ENCODE measurements at regions of chr3 and their contacts with region 1.

Region 1: DNA sequence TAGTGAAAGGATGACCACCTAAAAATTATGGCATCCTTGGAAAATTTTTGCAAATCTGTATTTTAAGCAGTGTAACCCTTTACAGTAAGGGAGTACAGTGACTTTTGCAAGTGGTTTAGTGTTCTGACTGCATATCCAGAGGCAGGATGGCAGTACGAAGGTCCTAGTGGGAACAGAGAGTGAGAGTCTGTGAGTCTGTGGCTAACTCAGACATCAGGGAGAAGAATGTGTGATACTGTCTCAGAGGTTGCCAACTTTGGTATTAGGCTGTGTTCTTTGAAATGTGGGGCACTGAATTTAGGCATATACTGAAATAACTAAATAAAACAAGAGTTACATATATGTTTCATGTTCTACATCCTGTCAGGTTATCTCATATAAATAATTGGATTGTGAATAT is 25.7 kb downstream of the PRKCI start:
- DNase-seq: no peak
- H3K4me3 Mint-ChIP-seq: no peak overlapping the region
- H3K27ac Mint-ChIP-seq: no peak overlapping the region
- H3K4me1 Mint-ChIP-seq: peaks cover 11% of the 10 kb centered on the region
- H3K27me3 Mint-ChIP-seq: no peaks in the 10 kb centered on the region

Region 2: GRCh38 chr3:170228093-170228766 is 19.6 kb before region 1 on chr3:
- CTCF ChIA-PET with region 1: no interaction called
- intact Hi-C with region 1: loop called (anchors 2 kb)
- DNase-seq: no peak
- H3K4me3 Mint-ChIP-seq: no peak overlapping the region
- H3K27ac Mint-ChIP-seq: no peak overlapping the region
- H3K4me1 Mint-ChIP-seq: peaks cover 24% of the 10 kb centered on the region
- H3K27me3 Mint-ChIP-seq: no peaks in the 10 kb centered on the region

Region 3: DNA sequence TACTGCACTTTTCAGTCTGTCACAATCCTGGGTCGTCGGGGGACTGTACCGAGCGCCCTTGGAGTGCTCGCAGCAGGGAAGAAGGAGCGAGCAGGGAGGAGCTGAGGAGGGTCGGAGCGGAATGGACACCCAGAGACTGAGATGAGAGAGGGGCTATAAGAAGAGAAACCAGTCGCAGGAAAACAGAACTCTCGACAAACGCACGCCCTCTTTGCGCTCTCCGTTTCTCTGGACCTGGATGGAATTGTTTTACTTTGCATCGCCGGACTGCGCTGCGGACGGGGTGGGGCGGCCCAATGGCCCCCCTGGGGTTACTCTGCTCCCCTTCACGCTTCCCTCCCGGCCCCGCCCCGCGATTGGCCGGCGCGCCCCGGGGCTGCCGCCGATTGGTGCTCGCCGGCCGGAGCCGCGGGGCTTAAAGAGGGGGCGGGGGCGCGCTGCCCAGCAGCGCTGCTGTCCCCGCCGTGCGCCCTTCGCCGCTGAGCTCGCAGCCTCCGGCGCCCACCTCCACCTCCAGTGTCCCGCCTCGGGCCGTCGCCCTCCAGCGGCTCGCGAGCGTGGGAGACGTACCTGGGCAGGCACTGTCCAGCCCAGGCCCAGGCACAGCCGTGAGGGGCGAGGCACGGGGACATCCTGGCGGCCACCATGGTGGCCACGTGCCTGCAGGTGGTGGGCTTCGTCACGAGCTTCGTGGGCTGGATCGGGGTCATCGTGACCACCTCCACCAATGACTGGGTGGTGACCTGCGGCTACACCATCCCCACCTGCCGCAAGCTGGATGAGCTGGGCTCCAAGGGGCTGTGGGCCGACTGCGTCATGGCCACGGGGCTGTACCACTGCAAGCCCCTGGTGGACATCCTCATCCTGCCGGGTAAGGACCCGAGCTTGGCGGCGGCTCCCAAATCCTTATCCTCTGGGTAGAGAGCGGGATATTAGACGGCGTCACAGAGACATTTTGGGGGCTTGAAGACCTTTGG is 170.8 kb after region 1 on chr3 and contains the start of gene CLDN11:
- CTCF ChIA-PET with region 1: no interaction called
- intact Hi-C with region 1: no loop called
- DNase-seq: no peak
- H3K4me3 Mint-ChIP-seq: peak within 1 kb of the TSS; percentile 71
- H3K27ac Mint-ChIP-seq: no peak within 1 kb of the TSS
- H3K4me1 Mint-ChIP-seq: peaks cover 9% of the 10 kb centered on the region
- H3K27me3 Mint-ChIP-seq: peaks cover 31% of the 10 kb centered on the region
- total RNA-seq, gene CLDN11: not detected